ENCODE measurements at regions of chr2 and their contacts with region 1.

Region 1: GRCh38 chr2:186349508-186349907 is 136.6 kb upstream of the ZC3H15 start:
- DNase-seq: peak; percentile 93
- H3K4me3 Mint-ChIP-seq: peak overlapping the region; percentile 60
- H3K27ac Mint-ChIP-seq: peak overlapping the region; percentile 64
- H3K4me1 Mint-ChIP-seq: peaks cover 15% of the 10 kb centered on the region
- H3K27me3 Mint-ChIP-seq: no peaks in the 10 kb centered on the region
- CTCF ChIP-seq: no peak

Region 2: DNA sequence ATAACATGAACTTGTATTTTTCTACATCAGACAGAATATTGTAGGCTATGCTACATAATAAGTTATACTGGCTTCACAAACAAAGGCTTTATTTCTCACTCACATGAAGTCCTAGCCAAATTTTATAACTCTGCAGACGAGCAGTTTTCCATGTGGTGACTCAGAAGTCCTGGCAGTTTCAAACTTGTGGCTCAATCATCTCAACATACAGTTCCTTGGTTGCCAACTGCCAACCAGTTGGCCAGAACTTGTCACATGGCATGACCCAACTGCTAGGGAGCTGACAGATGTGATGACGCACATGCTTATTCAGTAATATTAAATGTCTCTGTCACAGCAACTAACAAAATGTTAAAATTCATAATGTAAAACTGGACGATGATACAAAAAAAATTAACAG is 72.7 kb after region 1 on chr2:
- CTCF ChIA-PET with region 1: no interaction called
- POLR2A ChIA-PET with region 1: interaction called, 17 read pairs
- intact Hi-C with region 1: no loop called
- DNase-seq: peak; percentile 93
- H3K4me3 Mint-ChIP-seq: no peak overlapping the region
- H3K27ac Mint-ChIP-seq: peak overlapping the region; percentile 80
- H3K4me1 Mint-ChIP-seq: peaks cover 13% of the 10 kb centered on the region
- H3K27me3 Mint-ChIP-seq: no peaks in the 10 kb centered on the region
- CTCF ChIP-seq: no peak